ENCODE measurements at regions of chr2 and their contacts with region 1.

Region 1: GRCh38 chr2:161223139-161223732 is 63.0 kb downstream of the TANK start:
- DNase-seq: no peak
- H3K4me3 ChIP-seq: no peak overlapping the region
- H3K27ac ChIP-seq: no peak overlapping the region
- H3K4me1 ChIP-seq: peaks cover 0 to 4% of the 10 kb centered on the region in 2 experiments; a peak in 1 of 4 replicates
- H3K27me3 ChIP-seq: no peaks in the 10 kb centered on the region
- CTCF ChIP-seq: peak; percentile 74
- EP300 ChIP-seq: no peak
- RAD21 ChIP-seq: peak; percentile 79

Region 2: GRCh38 chr2:161208527-161209139 is 14.6 kb before region 1 on chr2:
- CTCF ChIA-PET with region 1: interaction called, 12 read pairs
- POLR2A ChIA-PET with region 1: no interaction called
- DNase-seq: no peak
- H3K4me3 ChIP-seq: no peak overlapping the region
- H3K27ac ChIP-seq: peak overlapping the region in 1 of 2 experiments; percentile 43; a peak in 1 of 4 replicates
- H3K4me1 ChIP-seq: peaks cover 0 to 12% of the 10 kb centered on the region in 2 experiments; a peak in 1 of 4 replicates
- H3K27me3 ChIP-seq: no peaks in the 10 kb centered on the region
- CTCF ChIP-seq: no peak
- EP300 ChIP-seq: no peak
- RAD21 ChIP-seq: no peak

Region 3: DNA sequence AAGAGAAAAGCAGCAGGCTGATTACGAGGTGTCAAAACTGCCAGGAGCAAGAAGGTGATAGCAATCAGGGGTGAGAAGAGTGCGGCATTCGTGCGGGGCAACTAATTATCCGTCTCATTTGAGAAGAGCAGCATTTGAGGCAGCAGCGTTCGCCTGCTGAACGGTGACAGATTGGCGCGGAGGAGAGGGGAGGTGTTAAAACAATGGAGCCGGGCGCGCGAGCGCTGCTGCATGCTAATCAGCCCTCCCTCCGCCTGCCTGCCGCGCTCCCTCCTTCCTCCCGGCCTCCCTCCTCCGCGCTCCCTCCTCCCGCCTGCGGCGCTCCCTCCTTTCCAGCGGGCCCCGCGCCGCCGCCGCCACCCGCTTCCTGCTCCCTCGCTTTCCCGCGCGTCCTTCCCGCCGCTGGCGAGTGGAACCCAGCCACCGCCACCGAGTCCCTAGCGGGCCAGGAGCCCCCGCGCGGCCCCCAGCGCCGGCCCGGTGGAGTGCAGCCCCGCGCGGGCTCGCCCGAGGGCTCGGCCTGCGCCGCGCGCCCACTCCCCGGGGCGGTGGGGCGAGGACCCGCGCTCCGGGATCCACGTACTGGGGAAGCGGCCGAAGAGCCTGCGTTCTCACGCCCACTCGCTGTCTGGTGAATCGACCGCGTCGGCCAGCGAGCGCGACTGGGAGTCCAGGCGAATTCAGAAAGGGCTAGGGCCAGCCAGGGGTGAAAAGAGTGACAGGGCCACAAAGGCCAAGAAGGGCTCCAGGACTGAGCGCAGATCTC is 15.5 kb after region 1 on chr2:
- CTCF ChIA-PET with region 1: interaction called, 33 read pairs
- POLR2A ChIA-PET with region 1: no interaction called
- DNase-seq: peak; percentile 80
- H3K4me3 ChIP-seq: peak overlapping the region; percentile 52 to 59
- H3K27ac ChIP-seq: no peak overlapping the region
- H3K4me1 ChIP-seq: peaks cover 5 to 11% of the 10 kb centered on the region in 2 experiments; a peak in 2 of 4 replicates
- H3K27me3 ChIP-seq: no peaks in the 10 kb centered on the region
- CTCF ChIP-seq: no peak
- EP300 ChIP-seq: no peak
- RAD21 ChIP-seq: no peak

Region 4: GRCh38 chr2:161250864-161251436 is 27.7 kb after region 1 on chr2:
- CTCF ChIA-PET with region 1: interaction called, 110 read pairs
- POLR2A ChIA-PET with region 1: no interaction called
- DNase-seq: peak; percentile 67
- H3K4me3 ChIP-seq: no peak overlapping the region; a peak in 1 of 4 replicates
- H3K27ac ChIP-seq: no peak overlapping the region
- H3K4me1 ChIP-seq: no peaks in the 10 kb centered on the region; a peak in 1 of 4 replicates
- H3K27me3 ChIP-seq: 0 out of 2 replicates have a peak, but pooled peaks cover 4% of the 10 kb centered on the region
- CTCF ChIP-seq: peak; percentile 76
- EP300 ChIP-seq: no peak
- RAD21 ChIP-seq: peak; percentile 69

Region 5: GRCh38 chr2:161265874-161266273 is 42.6 kb after region 1 on chr2:
- CTCF ChIA-PET with region 1: interaction called, 28 read pairs
- POLR2A ChIA-PET with region 1: no interaction called
- DNase-seq: no peak
- H3K4me3 ChIP-seq: no peak overlapping the region
- H3K27ac ChIP-seq: no peak overlapping the region
- H3K4me1 ChIP-seq: no peaks in the 10 kb centered on the region
- H3K27me3 ChIP-seq: no peaks in the 10 kb centered on the region; the same call in 1 of the 2 replicates
- CTCF ChIP-seq: no peak
- EP300 ChIP-seq: no peak
- RAD21 ChIP-seq: no peak

Region 6: DNA sequence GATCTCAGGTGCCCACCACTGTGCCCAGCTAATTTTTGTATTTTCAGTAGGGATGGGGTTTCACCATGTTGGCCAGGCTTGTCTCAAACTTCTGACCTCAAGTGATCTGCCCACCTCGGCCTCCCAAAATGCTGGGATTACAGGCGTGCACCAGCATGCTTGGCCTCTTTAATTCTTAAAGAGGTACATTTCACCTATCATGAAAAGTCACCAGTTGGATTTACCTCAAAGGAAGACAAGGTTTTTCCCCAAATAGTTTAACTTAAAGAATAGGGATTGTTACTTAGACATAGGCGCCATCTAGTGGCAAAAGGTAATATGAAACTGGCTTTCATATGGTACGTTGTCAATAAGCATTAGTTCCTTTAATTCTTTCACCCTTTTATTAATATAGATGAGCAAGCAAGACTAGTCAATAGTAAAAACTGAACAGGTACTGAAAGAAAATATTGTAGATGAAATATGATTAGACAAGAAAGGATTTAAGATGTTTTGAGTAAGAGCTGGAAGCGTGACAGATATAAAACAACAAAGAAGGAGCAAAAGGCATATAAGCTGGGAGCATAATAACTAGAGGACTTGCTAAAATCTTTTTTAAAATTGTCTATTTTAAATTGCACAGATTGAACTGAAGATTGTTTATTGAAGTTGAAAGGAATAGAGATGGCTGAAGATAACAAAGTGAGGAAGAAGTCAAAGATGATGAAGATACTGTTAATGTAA is 50.0 kb after region 1 on chr2:
- CTCF ChIA-PET with region 1: interaction called, 63 read pairs
- POLR2A ChIA-PET with region 1: no interaction called
- DNase-seq: peak; percentile 45
- H3K4me3 ChIP-seq: no peak overlapping the region
- H3K27ac ChIP-seq: no peak overlapping the region
- H3K4me1 ChIP-seq: no peaks in the 10 kb centered on the region
- H3K27me3 ChIP-seq: no peaks in the 10 kb centered on the region; the same call in 1 of the 2 replicates
- CTCF ChIP-seq: peak; percentile 88
- EP300 ChIP-seq: no peak
- RAD21 ChIP-seq: peak; percentile 79

Measured in SK-N-SH (cell line).